RWPE1 (cell line): ENCODE measurements at regions of chr19 and their contacts with region 1.

Region 1: GRCh38 chr19:1252821-1253513 is 4.6 kb downstream of the MIDN start:
- DNase-seq: peak; percentile 85
- H3K27ac ChIP-seq: peak overlapping the region; percentile 100
- CTCF ChIP-seq: no peak

Region 2: DNA sequence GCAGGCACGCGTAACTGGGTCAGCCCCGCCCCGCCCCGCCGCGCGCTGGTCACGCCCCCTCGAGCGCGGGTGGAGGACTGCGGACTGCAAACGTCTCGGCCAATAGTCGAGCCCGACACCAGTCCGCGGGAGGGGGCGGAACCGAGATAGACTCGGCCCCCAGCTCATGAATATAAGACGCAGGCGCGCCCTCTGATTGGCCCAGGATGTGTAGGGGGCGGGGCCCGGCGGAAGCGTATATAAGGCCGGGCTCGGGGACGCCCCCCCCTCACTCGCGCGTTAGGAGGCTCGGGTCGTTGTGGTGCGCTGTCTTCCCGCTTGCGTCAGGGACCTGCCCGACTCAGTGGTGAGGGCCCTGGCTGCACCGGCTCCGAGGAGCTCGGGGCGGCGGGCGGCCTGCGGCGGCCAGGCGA is 16.1 kb after region 1 on chr19 and contains the start of gene CIRBP:
- CTCF ChIA-PET with region 1: interaction called, 9 read pairs
- POLR2A ChIA-PET with region 1: interaction called, 14 read pairs
- DNase-seq: peak; percentile 95
- H3K27ac ChIP-seq: peak within 1 kb of the TSS; percentile 100
- CTCF ChIP-seq: no peak